ENCODE measurements at regions of chr5 and their contacts with region 1.

Region 1: GRCh38 chr5:157718519-157718918 is 12.7 kb upstream of the THG1L start:
- DNase-seq: no peak
- H3K4me3 ChIP-seq: peak overlapping the region in 1 of 2 donors; percentile 1
- H3K27ac ChIP-seq: no peak overlapping the region
- H3K4me1 ChIP-seq: peaks cover 0 to 5% of the 10 kb centered on the region in 2 donors
- H3K27me3 ChIP-seq: no peaks in the 10 kb centered on the region
- CTCF ChIP-seq: peak; percentile 55 to 64 (median 61)

Region 2: GRCh38 chr5:157328277-157328912 is 390.1 kb before region 1 on chr5:
- intact Hi-C with region 1: loop called (anchors 1 kb)
- DNase-seq: peak in 1 of 2 donors; percentile 70
- H3K4me3 ChIP-seq: peak overlapping the region; percentile 2 to 37
- H3K27ac ChIP-seq: no peak overlapping the region
- H3K4me1 ChIP-seq: no peaks in the 10 kb centered on the region
- H3K27me3 ChIP-seq: no peaks in the 10 kb centered on the region
- CTCF ChIP-seq: peak; percentile 79 to 91 (median 83)

Region 3: GRCh38 chr5:157366741-157367674 is 351.5 kb before region 1 on chr5:
- intact Hi-C with region 1: loop called (anchors 1 kb)
- DNase-seq: peak in 1 of 2 donors; percentile 72
- H3K4me3 ChIP-seq: no peak overlapping the region
- H3K27ac ChIP-seq: peak overlapping the region; percentile 28 to 54
- H3K4me1 ChIP-seq: peaks cover 0 to 3% of the 10 kb centered on the region in 2 donors
- H3K27me3 ChIP-seq: no peaks in the 10 kb centered on the region
- CTCF ChIP-seq: peak; percentile 53 to 78 (median 68)

Region 4: GRCh38 chr5:157431544-157432200 is 286.8 kb before region 1 on chr5:
- intact Hi-C with region 1: loop called (anchors 2 kb)
- DNase-seq: no peak
- H3K4me3 ChIP-seq: no peak overlapping the region
- H3K27ac ChIP-seq: no peak overlapping the region
- H3K4me1 ChIP-seq: no peaks in the 10 kb centered on the region
- H3K27me3 ChIP-seq: no peaks in the 10 kb centered on the region
- CTCF ChIP-seq: peak; percentile 7 to 51 (median 22)

Region 5: DNA sequence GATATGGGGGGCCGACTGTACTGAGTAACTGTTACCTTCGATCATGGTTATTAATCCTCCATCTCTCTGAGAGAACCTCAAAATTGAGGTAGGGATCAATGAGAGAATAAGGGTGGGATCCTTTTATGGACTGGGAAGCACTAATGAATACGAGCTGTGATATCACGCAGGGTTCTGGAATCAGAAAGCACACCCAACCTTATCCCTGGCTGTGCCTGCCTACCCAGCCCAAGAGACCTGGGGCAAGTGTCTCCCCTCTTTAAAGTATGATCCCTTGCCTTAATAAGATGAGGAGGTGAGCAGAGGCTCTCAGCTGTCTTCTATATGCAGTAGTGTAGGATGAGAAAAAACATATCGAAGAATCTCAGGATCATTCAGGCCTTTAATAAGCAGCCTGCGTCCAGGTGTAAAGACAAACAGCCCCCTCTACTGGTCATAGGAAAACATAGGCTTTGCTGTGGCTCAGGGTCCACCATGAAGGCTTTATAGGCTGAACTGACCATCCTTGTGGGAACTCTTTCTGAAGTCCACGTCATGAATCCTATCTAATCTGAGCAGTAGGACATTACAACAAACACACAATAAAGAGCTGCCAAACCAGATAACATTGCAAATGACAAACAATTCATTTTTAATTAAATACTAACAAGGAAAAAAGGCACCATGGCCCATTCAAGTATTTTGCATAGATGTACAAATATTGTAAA is 241.7 kb before region 1 on chr5:
- intact Hi-C with region 1: loop called (anchors 2 kb)
- DNase-seq: no peak
- H3K4me3 ChIP-seq: no peak overlapping the region
- H3K27ac ChIP-seq: no peak overlapping the region
- H3K4me1 ChIP-seq: peaks cover 3 to 9% of the 10 kb centered on the region in 2 donors
- H3K27me3 ChIP-seq: no peaks in the 10 kb centered on the region
- CTCF ChIP-seq: peak; percentile 51 to 78 (median 67)

Region 6: GRCh38 chr5:157571357-157571827 is 147.1 kb before region 1 on chr5:
- intact Hi-C with region 1: no loop called
- DNase-seq: no peak
- H3K4me3 ChIP-seq: no peak overlapping the region
- H3K27ac ChIP-seq: peak overlapping the region; percentile 13 to 20
- H3K4me1 ChIP-seq: peaks cover 10 to 22% of the 10 kb centered on the region in 2 donors
- H3K27me3 ChIP-seq: no peaks in the 10 kb centered on the region
- CTCF ChIP-seq: no peak

Measured in ascending aorta (tissue), 2 donors.